ENCODE measurements at regions of chr2 and their contacts with region 1.

Region 1: GRCh38 chr2:69013840-69014821 is 1.2 kb downstream of the ANTXR1 start:
- DNase-seq: no peak
- ATAC-seq: peak; percentile 24
- H3K4me3 Mint-ChIP-seq: peak overlapping the region; percentile 51
- H3K27ac Mint-ChIP-seq: no peak overlapping the region
- H3K4me1 Mint-ChIP-seq: peaks cover 17% of the 10 kb centered on the region
- H3K27me3 Mint-ChIP-seq: peaks cover 86% of the 10 kb centered on the region

Region 2: DNA sequence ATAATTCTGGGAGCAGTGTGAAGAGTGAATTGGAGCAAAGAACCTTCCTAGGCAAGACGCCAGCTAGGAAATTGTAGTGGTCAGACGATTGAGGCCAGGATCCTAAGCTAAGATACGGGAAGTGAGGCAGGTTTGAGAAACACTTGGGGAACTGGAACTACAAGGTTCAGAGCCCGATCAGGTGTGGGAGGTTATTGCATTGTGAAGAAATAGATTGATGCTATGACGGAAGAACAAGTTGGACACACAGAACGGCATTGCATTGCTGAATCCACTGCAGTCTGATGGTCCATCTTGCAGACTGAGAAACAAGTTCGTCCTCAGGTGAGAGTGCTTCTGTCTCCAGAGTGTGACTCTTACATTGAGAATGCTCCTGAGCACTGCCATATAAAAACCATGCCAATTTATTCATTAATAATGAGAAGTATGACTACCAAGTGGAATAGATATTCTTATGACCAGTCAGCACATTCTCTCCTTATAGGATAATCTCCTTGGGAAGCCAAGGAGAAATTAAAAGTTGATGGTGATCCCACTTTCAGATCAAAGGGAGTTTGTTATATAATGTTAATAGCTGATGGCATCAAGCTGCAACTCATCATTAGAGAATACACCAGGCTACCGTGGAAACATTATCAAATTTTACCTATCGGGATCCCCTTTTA is 29.7 kb after region 1 on chr2:
- CTCF ChIA-PET with region 1: no interaction called
- DNase-seq: no peak
- ATAC-seq: no peak
- H3K4me3 Mint-ChIP-seq: no peak overlapping the region
- H3K27ac Mint-ChIP-seq: no peak overlapping the region
- H3K4me1 Mint-ChIP-seq: no peaks in the 10 kb centered on the region
- H3K27me3 Mint-ChIP-seq: peaks cover 85% of the 10 kb centered on the region

Region 3: DNA sequence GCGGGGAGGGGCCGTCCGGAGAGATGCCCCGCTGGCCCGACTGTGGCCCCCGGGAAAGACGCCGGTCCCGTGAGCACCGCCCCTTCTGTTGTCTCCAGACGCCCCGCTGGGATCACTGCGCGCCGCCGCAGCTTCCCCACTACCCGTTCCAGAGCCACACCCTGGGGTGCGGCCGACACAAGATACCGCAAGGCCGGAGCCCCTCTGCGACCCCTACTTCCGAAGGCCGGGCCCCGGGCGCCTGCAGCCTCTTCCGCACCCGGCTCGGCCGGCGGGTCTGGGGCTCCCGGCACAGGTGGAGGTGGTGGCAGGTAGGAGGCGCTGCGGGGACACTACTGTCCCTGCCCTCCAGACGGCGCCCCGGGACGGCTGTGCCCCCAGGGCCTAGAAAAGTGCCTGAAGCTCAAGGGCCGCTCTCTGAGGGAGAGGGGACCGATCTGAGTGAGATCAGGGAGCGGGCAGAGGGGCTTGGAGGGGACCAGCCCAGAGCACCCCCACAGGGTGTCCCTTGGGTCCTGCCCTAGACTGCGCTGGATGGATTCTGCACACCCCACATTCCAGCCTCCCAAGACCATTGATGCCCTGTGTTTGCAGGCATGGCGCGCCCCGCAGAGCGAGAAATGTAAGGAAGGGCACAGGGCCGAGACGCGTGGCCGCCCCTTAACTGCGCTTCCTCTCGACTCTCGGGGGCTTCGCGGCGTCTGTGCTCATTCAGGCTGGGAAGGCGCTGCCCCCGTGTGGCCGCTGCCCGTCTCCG is 292.9 kb after region 1 on chr2:
- CTCF ChIA-PET with region 1: interaction called, 16 read pairs
- DNase-seq: peak; percentile 82
- ATAC-seq: peak; percentile 95
- H3K4me3 Mint-ChIP-seq: peak overlapping the region; percentile 56
- H3K27ac Mint-ChIP-seq: no peak overlapping the region
- H3K4me1 Mint-ChIP-seq: peaks cover 11% of the 10 kb centered on the region
- H3K27me3 Mint-ChIP-seq: peaks cover 54% of the 10 kb centered on the region